Endothelial cell of umbilical vein (primary cell): ENCODE measurements at regions of chr10 and their contacts with region 1.

Region 1: GRCh38 chr10:127694580-127695193 is 42.3 kb upstream of the FOXI2 start:
- DNase-seq: peak; percentile 25
- H3K4me3 ChIP-seq: no peak overlapping the region
- H3K27ac ChIP-seq: no peak overlapping the region
- H3K4me1 ChIP-seq: no peaks in the 10 kb centered on the region
- H3K27me3 ChIP-seq: no peaks in the 10 kb centered on the region
- CTCF ChIP-seq: peak; percentile 62 to 74
- POLR2A ChIP-seq: no peak

Region 2: GRCh38 chr10:126997801-126998590 is 696.7 kb before region 1 on chr10:
- CTCF ChIA-PET with region 1: no interaction called
- POLR2A ChIA-PET with region 1: no interaction called
- dilution Hi-C with region 1: no loop called
- intact Hi-C with region 1: no loop called
- DNase-seq: no peak
- H3K4me3 ChIP-seq: no peak overlapping the region
- H3K27ac ChIP-seq: no peak overlapping the region
- H3K4me1 ChIP-seq: no peaks in the 10 kb centered on the region
- H3K27me3 ChIP-seq: no peaks in the 10 kb centered on the region
- CTCF ChIP-seq: no peak
- POLR2A ChIP-seq: no peak

Region 3: GRCh38 chr10:127563718-127564553 is 130.8 kb before region 1 on chr10:
- CTCF ChIA-PET with region 1: no interaction called
- POLR2A ChIA-PET with region 1: no interaction called
- dilution Hi-C with region 1: no loop called
- intact Hi-C with region 1: loop called (anchors 2 kb)
- DNase-seq: no peak
- H3K4me3 ChIP-seq: no peak overlapping the region
- H3K27ac ChIP-seq: no peak overlapping the region
- H3K4me1 ChIP-seq: no peaks in the 10 kb centered on the region
- H3K27me3 ChIP-seq: no peaks in the 10 kb centered on the region
- CTCF ChIP-seq: peak; percentile 69 to 73
- POLR2A ChIP-seq: no peak

Region 4: DNA sequence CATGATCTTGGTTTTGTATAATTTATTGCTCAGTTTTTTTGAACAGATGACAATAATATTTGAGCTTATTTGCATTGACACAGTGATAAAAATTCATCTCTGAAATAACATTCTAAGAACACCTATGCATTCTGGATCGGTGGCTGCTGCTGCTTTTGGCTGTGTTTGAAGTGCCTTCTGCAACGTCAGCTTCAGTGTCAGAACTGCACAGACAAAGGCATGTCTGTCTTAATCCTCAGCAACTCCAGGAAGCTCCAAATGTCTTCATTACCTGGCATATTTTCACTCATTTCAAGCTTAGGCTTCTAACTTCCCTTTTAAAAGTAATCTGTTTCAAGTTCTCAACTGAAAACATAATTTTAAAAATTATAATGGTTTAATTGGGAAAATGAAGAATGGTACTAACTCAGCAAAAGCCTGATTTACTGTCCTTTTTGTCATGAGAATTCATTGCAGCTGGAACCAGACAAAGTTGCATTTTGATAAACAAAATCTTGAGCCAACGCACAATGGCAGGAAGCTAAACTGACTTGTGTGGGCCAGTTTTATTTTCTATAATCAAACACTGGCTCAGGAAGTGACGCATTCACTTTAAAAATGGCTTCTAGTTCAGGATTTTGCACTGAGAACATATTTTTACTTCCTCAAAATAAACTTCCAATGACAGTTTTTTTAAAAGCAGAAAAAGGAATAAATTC is 106.9 kb before region 1 on chr10:
- CTCF ChIA-PET with region 1: no interaction called
- POLR2A ChIA-PET with region 1: no interaction called
- dilution Hi-C with region 1: no loop called
- intact Hi-C with region 1: no loop called
- DNase-seq: peak; percentile 45
- H3K4me3 ChIP-seq: no peak overlapping the region
- H3K27ac ChIP-seq: no peak overlapping the region
- H3K4me1 ChIP-seq: peaks cover 4% of the 10 kb centered on the region
- H3K27me3 ChIP-seq: no peaks in the 10 kb centered on the region
- CTCF ChIP-seq: no peak
- POLR2A ChIP-seq: no peak

Region 5: DNA sequence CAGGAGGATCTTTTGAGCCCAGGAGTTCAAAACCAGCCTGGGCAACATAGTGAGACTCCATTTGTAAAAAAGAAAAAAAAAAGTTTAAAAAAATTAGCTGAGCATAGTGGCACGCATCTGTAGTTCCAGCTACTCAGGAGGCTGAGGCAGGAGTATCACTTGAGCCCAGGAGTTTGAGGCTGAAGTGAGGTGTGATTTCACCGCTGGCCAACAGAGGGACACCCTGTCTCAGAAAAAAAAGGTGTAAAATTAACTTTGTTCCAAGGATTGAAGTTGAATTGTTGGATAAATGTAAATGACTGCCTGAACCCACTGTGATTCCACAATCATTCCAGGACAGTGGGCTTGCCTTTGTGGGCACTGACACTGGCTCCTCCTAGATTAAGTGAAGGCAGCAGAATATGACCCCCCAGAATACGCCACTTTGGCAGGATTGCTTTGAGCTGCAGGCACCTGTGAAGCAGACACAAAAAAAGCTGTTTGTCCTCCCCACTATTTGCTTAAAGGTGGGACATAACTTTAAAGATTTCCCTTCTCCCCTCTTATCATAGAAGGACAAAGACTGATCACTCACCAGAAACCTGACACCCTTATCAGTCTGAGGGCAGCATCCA is 14.9 kb before region 1 on chr10:
- CTCF ChIA-PET with region 1: interaction called, 11 read pairs
- POLR2A ChIA-PET with region 1: no interaction called
- dilution Hi-C with region 1: no loop called
- intact Hi-C with region 1: no loop called
- DNase-seq: no peak
- H3K4me3 ChIP-seq: no peak overlapping the region
- H3K27ac ChIP-seq: no peak overlapping the region
- H3K4me1 ChIP-seq: no peaks in the 10 kb centered on the region
- H3K27me3 ChIP-seq: no peaks in the 10 kb centered on the region
- CTCF ChIP-seq: peak in 1 of 2 donors; percentile 36
- POLR2A ChIP-seq: no peak